ENCODE measurements at regions of chr14 and their contacts with region 1.

Region 1: GRCh38 chr14:75487155-75487671 is 35.1 kb upstream of the BATF start:
- DNase-seq: peak; percentile 44
- ATAC-seq: peak; percentile 75
- H3K4me3 Mint-ChIP-seq: no peak overlapping the region
- H3K27ac Mint-ChIP-seq: peak overlapping the region; percentile 28
- H3K4me1 Mint-ChIP-seq: peaks cover 29% of the 10 kb centered on the region
- H3K27me3 Mint-ChIP-seq: peaks cover 2% of the 10 kb centered on the region

Region 2: GRCh38 chr14:75084513-75084912 is 402.7 kb before region 1 on chr14:
- CTCF ChIA-PET with region 1: no interaction called
- POLR2A ChIA-PET with region 1: no interaction called
- DNase-seq: no peak
- ATAC-seq: no peak
- H3K4me3 Mint-ChIP-seq: no peak overlapping the region
- H3K27ac Mint-ChIP-seq: no peak overlapping the region
- H3K4me1 Mint-ChIP-seq: no peaks in the 10 kb centered on the region
- H3K27me3 Mint-ChIP-seq: no peaks in the 10 kb centered on the region

Region 3: GRCh38 chr14:75307700-75308379 is 179.4 kb before region 1 on chr14:
- CTCF ChIA-PET with region 1: interaction called, 138 read pairs
- POLR2A ChIA-PET with region 1: no interaction called
- DNase-seq: peak; percentile 81
- ATAC-seq: peak; percentile 80
- H3K4me3 Mint-ChIP-seq: no peak overlapping the region
- H3K27ac Mint-ChIP-seq: no peak overlapping the region
- H3K4me1 Mint-ChIP-seq: peaks cover 26% of the 10 kb centered on the region
- H3K27me3 Mint-ChIP-seq: peaks cover 3% of the 10 kb centered on the region

Region 4: GRCh38 chr14:75361751-75362433 is 125.3 kb before region 1 on chr14:
- CTCF ChIA-PET with region 1: no interaction called
- POLR2A ChIA-PET with region 1: no interaction called
- DNase-seq: no peak
- ATAC-seq: no peak
- H3K4me3 Mint-ChIP-seq: no peak overlapping the region
- H3K27ac Mint-ChIP-seq: no peak overlapping the region
- H3K4me1 Mint-ChIP-seq: no peaks in the 10 kb centered on the region
- H3K27me3 Mint-ChIP-seq: peaks cover 15% of the 10 kb centered on the region

Region 5: DNA sequence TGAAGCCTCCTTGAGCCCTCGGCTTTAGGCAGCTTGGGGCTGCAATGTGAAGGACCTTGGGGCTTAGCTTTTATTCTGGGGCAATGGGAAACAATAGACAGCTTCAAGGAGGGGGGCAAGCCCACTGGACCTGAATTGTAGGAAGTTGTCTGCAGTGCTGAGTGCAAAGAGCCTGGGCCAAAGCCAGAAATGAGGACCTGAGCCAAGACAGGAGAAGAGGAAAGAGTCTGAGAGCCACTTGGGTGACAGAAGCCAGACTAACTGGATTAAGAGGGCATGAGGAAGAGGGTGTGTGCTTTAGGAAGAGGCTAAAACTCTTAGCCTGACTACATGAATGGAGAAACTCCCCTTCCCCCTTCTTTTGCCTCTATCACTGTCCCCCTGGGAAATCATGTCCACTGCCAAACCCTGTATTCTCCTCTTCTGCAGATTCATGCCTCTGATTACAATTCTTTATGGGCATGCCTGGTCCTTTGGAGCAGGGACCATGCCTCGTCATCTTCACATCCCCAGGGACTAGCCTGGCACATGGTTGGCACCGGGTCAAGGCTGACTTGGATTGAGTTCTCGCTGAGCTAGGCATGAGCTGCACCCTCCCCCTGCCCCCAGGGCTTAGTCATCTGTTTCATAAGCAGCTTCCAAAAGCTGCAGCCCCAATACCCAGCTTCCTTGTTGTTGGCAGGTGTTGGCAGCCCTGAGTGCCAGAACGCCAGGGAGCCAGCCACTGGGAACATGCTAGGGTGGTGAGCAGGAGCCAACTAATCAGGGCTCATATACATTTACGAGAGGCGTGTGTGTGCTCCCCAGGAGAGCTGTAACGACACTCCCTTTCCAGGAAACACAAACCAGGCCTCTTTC is 87.2 kb before region 1 on chr14:
- CTCF ChIA-PET with region 1: no interaction called
- POLR2A ChIA-PET with region 1: no interaction called
- DNase-seq: no peak
- ATAC-seq: no peak
- H3K4me3 Mint-ChIP-seq: no peak overlapping the region
- H3K27ac Mint-ChIP-seq: peak overlapping the region; percentile 36
- H3K4me1 Mint-ChIP-seq: peaks cover 22% of the 10 kb centered on the region
- H3K27me3 Mint-ChIP-seq: peaks cover 21% of the 10 kb centered on the region

Region 6: GRCh38 chr14:75411214-75411540 is 76.0 kb before region 1 on chr14:
- CTCF ChIA-PET with region 1: no interaction called
- POLR2A ChIA-PET with region 1: no interaction called
- DNase-seq: no peak
- ATAC-seq: no peak
- H3K4me3 Mint-ChIP-seq: no peak overlapping the region
- H3K27ac Mint-ChIP-seq: no peak overlapping the region
- H3K4me1 Mint-ChIP-seq: no peaks in the 10 kb centered on the region
- H3K27me3 Mint-ChIP-seq: peaks cover 4% of the 10 kb centered on the region

Region 7: DNA sequence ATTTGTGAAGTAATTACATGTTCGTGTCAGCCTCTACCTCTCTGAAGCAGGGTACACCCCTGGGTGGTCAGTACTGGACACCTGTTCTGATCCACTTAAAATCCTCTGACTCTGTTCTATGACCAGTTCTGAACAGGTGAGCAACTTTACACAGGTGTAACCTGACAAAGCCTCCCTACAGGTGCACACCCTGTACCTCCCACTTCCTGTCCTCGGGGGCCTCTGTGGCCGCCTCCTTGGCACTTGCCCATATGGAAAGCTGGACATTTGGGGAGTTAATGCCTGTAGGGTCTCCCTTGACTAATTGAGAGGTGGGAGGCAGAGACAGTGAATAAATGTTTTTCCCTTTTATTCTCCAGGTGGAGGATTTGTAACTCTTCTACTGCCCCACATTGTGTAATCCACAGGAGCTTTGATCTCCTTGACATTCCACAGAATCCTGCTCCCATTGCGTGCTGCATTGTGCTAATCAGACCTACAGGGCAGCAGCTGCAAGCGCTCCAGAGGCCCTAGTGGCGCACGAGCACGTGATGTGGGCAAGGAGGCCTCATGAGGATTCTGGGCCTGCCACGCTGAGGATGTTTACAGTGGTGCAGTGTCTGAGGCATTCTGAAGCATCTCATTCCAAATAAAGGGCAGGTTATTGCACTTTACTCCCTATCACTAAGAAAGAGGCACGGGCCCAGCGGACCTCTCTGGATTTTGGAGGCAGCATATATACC is 10.8 kb before region 1 on chr14:
- CTCF ChIA-PET with region 1: interaction called, 15 read pairs
- POLR2A ChIA-PET with region 1: no interaction called
- DNase-seq: no peak
- ATAC-seq: no peak
- H3K4me3 Mint-ChIP-seq: no peak overlapping the region
- H3K27ac Mint-ChIP-seq: no peak overlapping the region
- H3K4me1 Mint-ChIP-seq: no peaks in the 10 kb centered on the region
- H3K27me3 Mint-ChIP-seq: peaks cover 8% of the 10 kb centered on the region

Region 8: DNA sequence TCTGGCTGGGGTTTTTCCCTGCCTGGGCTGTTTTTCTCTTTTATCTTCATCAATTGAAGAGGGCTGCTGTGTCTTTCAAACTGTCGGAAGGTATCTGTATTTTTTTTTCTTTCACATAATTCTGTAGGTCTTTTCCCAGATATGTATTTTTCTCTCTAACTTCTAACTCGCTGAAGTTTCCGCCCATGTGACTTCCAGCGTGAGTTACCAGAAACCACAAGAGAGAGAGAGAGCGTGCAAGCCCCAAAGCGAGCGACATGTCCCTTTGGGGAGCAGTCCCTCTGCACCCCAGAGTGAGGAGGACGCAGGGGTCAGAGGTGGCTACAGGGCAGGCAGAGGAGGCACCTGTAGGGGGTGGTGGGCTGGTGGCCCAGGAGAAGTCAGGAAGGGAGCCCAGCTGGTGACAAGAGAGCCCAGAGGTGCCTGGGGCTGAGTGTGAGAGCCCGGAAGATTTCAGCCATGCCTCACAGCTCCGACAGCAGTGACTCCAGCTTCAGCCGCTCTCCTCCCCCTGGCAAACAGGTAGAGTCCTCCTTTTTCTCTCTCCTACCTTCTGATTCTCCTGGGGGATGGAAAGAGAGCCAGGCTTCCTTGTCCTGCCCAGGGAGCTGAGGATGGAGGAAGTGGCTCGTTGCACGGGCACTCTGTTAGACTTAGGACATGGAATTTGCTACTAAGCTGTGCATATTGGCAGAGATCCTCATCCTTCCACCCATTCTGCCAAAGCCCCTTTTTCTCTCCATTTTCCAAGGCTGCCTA is 35.2 kb after region 1 on chr14 and contains the start of gene BATF:
- CTCF ChIA-PET with region 1: interaction called, 38 read pairs
- POLR2A ChIA-PET with region 1: interaction called, 3 read pairs
- DNase-seq: peak; percentile 87
- ATAC-seq: peak; percentile 84
- H3K4me3 Mint-ChIP-seq: peak within 1 kb of the TSS; percentile 100
- H3K27ac Mint-ChIP-seq: peak within 1 kb of the TSS; percentile 99
- H3K4me1 Mint-ChIP-seq: peaks cover 63% of the 10 kb centered on the region
- H3K27me3 Mint-ChIP-seq: no peaks in the 10 kb centered on the region
- total RNA-seq, gene BATF: 41.3 to 41.6 TPM

Region 9: GRCh38 chr14:75560962-75561432 is 73.8 kb after region 1 on chr14:
- CTCF ChIA-PET with region 1: interaction called, 45 read pairs
- POLR2A ChIA-PET with region 1: no interaction called
- DNase-seq: peak; percentile 60
- ATAC-seq: peak; percentile 54
- H3K4me3 Mint-ChIP-seq: no peak overlapping the region
- H3K27ac Mint-ChIP-seq: no peak overlapping the region
- H3K4me1 Mint-ChIP-seq: peaks cover 54% of the 10 kb centered on the region
- H3K27me3 Mint-ChIP-seq: no peaks in the 10 kb centered on the region

Measured in activated CD8-positive, alpha-beta T cell treated with anti-CD3 and anti-CD28 coated beads, Interleukin-2, amount 10 ng/mL, durations not matched to agents 7 days and 5 days (primary cell).